ENCODE measurements at regions of chr7 and their contacts with region 1.

Region 1: DNA sequence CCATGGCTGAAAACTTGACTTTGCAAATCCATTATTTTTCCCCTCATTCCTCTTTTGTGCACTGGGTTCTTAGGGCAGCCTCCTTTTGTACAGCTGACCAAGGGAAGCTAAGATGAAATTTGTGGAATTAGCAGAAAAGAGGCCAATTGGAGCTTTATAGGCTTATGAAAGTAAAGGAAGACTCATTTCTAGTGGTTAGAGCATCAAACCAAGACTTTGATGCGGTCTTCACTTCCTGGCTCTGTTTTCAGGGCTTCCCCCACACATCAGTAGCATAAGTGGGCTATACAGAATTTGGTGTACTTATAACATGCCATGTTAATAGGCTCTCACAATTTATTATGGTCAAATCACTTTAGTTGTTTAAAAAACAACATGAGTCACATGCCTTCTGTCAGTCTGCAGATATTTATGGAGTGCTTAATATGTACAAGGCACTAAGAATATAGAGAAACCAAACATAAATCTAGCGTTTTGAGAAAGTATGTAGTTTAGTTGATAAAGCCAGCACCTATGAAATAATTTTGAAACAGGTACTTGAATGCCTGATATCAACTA is 5.7 kb downstream of the AUTS2 start:
- DNase-seq: peak in 1 of 2 donors; percentile 77
- ATAC-seq: peak; percentile 73 to 89 (median 75)
- H3K4me3 ChIP-seq: no peak overlapping the region
- H3K4me3 Mint-ChIP-seq: no peak overlapping the region
- H3K27ac ChIP-seq: no peak overlapping the region
- H3K27ac Mint-ChIP-seq: no peak overlapping the region
- H3K4me1 ChIP-seq: peaks cover 31% of the 10 kb centered on the region
- H3K4me1 Mint-ChIP-seq: peaks cover 0 to 8% of the 10 kb centered on the region in 2 donors
- H3K27me3 ChIP-seq: peaks cover 5% of the 10 kb centered on the region
- H3K27me3 Mint-ChIP-seq: peaks cover 0 to 10% of the 10 kb centered on the region in 2 donors
- CTCF ChIP-seq: no peak

Region 2: GRCh38 chr7:69588773-69589172 is 15.2 kb before region 1 on chr7:
- intact Hi-C with region 1: no loop called
- DNase-seq: no peak
- ATAC-seq: no peak
- H3K4me3 ChIP-seq: no peak overlapping the region
- H3K4me3 Mint-ChIP-seq: no peak overlapping the region
- H3K27ac ChIP-seq: no peak overlapping the region
- H3K27ac Mint-ChIP-seq: no peak overlapping the region
- H3K4me1 ChIP-seq: no peaks in the 10 kb centered on the region
- H3K4me1 Mint-ChIP-seq: no peaks in the 10 kb centered on the region
- H3K27me3 ChIP-seq: no peaks in the 10 kb centered on the region
- H3K27me3 Mint-ChIP-seq: peaks cover 0 to 5% of the 10 kb centered on the region in 2 donors
- CTCF ChIP-seq: no peak

Region 3: DNA sequence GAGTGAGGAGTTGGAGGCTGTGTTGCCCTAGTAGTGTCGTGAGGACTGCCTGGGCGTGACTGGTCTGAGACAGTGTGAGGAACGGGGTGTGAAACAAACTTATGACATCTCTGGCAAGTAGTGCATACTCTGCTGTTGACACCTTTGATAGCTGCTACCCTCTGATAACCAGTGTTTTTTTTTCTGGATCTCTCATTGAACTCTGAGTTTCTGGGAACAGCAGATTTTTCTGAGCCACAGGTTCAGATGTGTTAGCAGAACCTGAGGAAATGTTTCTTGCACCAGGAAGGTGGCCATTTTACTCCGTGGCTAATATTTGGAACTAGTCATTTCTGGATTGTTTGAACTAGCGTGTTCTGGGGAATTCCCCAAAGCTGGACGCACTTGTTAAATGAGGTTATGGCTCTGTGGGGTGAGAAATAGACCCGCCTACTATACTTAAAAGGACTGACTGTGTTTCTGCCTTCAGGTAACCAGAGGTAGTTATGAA is 47.1 kb after region 1 on chr7:
- intact Hi-C with region 1: loop called (anchors 2 kb)
- DNase-seq: peak; percentile 44 to 54
- ATAC-seq: peak; percentile 91 to 94 (median 94)
- H3K4me3 ChIP-seq: no peak overlapping the region
- H3K4me3 Mint-ChIP-seq: peak overlapping the region; percentile 74
- H3K27ac ChIP-seq: peak overlapping the region; percentile 50
- H3K27ac Mint-ChIP-seq: peak overlapping the region; percentile 82 to 84
- H3K4me1 ChIP-seq: peaks cover 14% of the 10 kb centered on the region
- H3K4me1 Mint-ChIP-seq: peaks cover 47 to 51% of the 10 kb centered on the region in 2 donors
- H3K27me3 ChIP-seq: no peaks in the 10 kb centered on the region
- H3K27me3 Mint-ChIP-seq: peaks cover 0 to 6% of the 10 kb centered on the region in 2 donors
- CTCF ChIP-seq: no peak

Measured in natural killer cell (primary cell).